H1 (cell line): ENCODE measurements at regions of chr15 and their contacts with region 1.

Region 1: DNA sequence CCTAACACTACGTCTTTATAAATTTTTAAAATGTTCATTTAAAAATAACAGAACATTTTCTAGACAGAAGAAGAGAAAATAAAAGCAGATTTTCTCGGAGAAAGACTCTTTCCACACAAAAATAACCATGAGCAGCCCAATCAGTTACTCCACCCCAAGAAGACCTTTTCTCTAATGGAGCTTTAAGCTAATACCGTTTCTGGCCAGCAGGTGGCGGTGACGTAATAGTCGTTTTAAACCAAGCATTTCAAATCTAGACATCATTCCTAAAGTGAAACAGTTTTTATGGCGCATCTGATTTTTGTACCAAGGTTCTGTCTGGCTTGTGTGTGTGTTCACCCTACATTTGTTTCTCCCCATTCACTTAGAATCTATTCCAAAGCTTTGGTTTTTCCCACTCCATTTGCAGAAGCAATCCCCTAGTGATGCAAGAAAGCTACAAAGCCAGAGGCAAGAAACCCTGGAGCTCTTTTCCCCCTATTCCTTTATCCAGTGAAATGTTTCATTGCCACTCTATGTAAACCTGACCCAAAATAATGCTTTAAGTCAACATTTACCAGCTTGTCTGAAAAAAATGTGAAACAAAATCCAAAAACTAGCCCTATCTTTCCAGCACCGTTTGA is 336.7 kb upstream of the IGF1R start:
- DNase-seq: peak in 1 of 2 experiments; percentile 90
- H3K4me3 ChIP-seq: no peak overlapping the region
- H3K27ac ChIP-seq: no peak overlapping the region
- H3K4me1 ChIP-seq: no peaks in the 10 kb centered on the region
- H3K27me3 ChIP-seq: no peaks in the 10 kb centered on the region
- CTCF ChIP-seq: peak in 2 of 3 experiments; percentile 66 to 78; a peak in 3 of 4 replicates
- EP300 ChIP-seq: no peak
- POLR2A ChIP-seq: no peak
- RAD21 ChIP-seq: peak; percentile 67 to 74

Region 2: GRCh38 chr15:98321896-98322295 is 10.2 kb after region 1 on chr15:
- CTCF ChIA-PET with region 1: interaction called, 35 read pairs
- POLR2A ChIA-PET with region 1: no interaction called
- DNase-seq: no peak
- H3K4me3 ChIP-seq: no peak overlapping the region
- H3K27ac ChIP-seq: no peak overlapping the region
- H3K4me1 ChIP-seq: no peaks in the 10 kb centered on the region
- H3K27me3 ChIP-seq: no peaks in the 10 kb centered on the region
- CTCF ChIP-seq: no peak
- EP300 ChIP-seq: no peak
- POLR2A ChIP-seq: no peak
- RAD21 ChIP-seq: no peak

Region 3: DNA sequence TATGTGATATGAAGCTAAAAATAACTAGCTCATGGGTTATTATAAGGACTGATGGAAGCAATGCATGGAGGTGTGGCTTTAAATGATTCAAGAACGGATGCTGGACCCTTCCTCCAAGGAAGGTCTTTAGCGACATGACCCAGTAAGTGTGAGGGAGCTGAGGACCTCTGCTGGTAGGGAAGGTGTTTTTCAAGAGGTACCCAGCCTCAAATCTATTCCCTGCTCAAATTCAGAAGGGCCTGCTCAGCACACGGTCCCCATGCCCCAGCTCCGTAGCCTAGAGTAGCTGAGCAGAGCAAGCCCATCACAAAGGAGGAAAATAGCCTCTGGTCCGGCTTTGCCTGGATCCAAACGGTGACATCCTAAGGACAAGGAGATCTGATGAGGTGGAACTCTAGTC is 70.5 kb after region 1 on chr15:
- CTCF ChIA-PET with region 1: interaction called, 22 read pairs
- POLR2A ChIA-PET with region 1: interaction called, 3 read pairs
- DNase-seq: peak; percentile 27 to 47
- H3K4me3 ChIP-seq: no peak overlapping the region
- H3K27ac ChIP-seq: no peak overlapping the region
- H3K4me1 ChIP-seq: peaks cover 0 to 5% (median 2%) of the 10 kb centered on the region in 4 experiments; a peak in 2 of 7 replicates
- H3K27me3 ChIP-seq: no peaks in the 10 kb centered on the region; a peak in 1 of 7 replicates
- CTCF ChIP-seq: peak; percentile 51 to 80 (median 66)
- EP300 ChIP-seq: no peak
- POLR2A ChIP-seq: no peak
- RAD21 ChIP-seq: peak; percentile 69 to 71

Region 4: GRCh38 chr15:98421419-98422129 is 109.9 kb after region 1 on chr15:
- CTCF ChIA-PET with region 1: interaction called, 58 read pairs
- POLR2A ChIA-PET with region 1: no interaction called
- DNase-seq: peak; percentile 39 to 96
- H3K4me3 ChIP-seq: peak overlapping the region in 3 of 4 experiments; percentile 40 to 57 (median 54); a peak in 7 of 8 replicates
- H3K27ac ChIP-seq: no peak overlapping the region
- H3K4me1 ChIP-seq: peaks cover 0 to 6% (median 3%) of the 10 kb centered on the region in 4 experiments; a peak in 4 of 7 replicates
- H3K27me3 ChIP-seq: peaks cover 13 to 35% (median 28%) of the 10 kb centered on the region in 4 experiments
- CTCF ChIP-seq: peak; percentile 87 to 92 (median 88)
- EP300 ChIP-seq: no peak
- POLR2A ChIP-seq: no peak
- RAD21 ChIP-seq: peak; percentile 95 to 97